ENCODE measurements at regions of chr6 and their contacts with region 1.

Region 1: DNA sequence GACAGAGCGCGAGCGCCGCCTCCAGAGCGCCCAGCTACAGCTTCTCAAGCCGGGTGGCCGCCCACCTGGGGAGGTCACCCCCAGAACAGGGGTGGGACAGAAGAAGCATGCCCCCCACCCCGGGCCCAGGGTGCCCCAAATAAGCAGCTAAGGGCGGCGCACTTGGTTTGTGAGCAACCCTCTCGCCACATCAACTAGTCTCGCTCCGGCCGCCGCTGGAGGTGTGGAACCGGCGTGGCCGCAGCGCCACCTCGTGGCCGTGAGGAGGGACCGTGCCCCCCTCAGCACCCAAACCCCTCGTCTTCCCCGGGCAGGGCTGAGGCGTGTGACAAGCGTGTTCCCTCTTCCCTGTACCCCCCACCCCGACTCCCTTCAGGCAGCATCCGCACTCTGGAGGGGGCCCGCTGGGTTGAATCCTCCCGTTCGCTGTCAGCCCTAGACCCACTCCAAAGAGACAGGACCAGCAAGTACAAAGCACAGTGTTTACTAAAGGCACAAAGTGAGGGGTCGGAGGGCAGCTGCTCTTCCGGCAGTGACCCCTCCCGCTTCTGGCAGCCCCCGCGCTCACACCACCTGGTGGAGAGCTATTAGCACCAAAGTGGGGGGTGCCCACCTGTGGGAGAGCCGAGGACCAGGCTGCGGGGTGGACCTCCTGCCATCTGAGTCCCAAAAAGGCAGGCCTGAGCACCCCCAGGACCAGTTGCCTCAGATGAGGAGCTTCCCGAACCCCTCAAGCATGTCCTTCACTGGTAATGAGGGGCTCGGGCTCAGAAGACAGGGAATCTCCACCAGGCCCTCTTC is 45.4 kb downstream of the MDFI start:
- DNase-seq: peak; percentile 60 to 90 (median 74)
- ATAC-seq: peak; percentile 88
- H3K4me3 ChIP-seq: peak overlapping the region; percentile 59
- H3K4me3 Mint-ChIP-seq: peak overlapping the region; percentile 83
- H3K27ac ChIP-seq: no peak overlapping the region
- H3K27ac Mint-ChIP-seq: peak overlapping the region; percentile 79
- H3K4me1 ChIP-seq: peaks cover 20% of the 10 kb centered on the region
- H3K4me1 Mint-ChIP-seq: peaks cover 12% of the 10 kb centered on the region
- H3K27me3 ChIP-seq: no peaks in the 10 kb centered on the region
- H3K27me3 Mint-ChIP-seq: no peaks in the 10 kb centered on the region
- CTCF ChIP-seq: peak; percentile 83

Region 2: GRCh38 chr6:41306187-41306854 is 377.4 kb before region 1 on chr6:
- CTCF ChIA-PET with region 1: no interaction called
- POLR2A ChIA-PET with region 1: no interaction called
- intact Hi-C with region 1: loop called in 1 of 2 experiments (anchors 10 kb)
- DNase-seq: peak in 11 of 14 experiments; percentile 16 to 80 (median 24)
- ATAC-seq: no peak
- H3K4me3 ChIP-seq: no peak overlapping the region
- H3K4me3 Mint-ChIP-seq: no peak overlapping the region
- H3K27ac ChIP-seq: no peak overlapping the region
- H3K27ac Mint-ChIP-seq: no peak overlapping the region
- H3K4me1 ChIP-seq: no peaks in the 10 kb centered on the region
- H3K4me1 Mint-ChIP-seq: peaks cover 5% of the 10 kb centered on the region
- H3K27me3 ChIP-seq: peaks cover 2 to 5% of the 10 kb centered on the region in 2 experiments
- H3K27me3 Mint-ChIP-seq: peaks cover 5% of the 10 kb centered on the region
- CTCF ChIP-seq: peak; percentile 77

Region 3: DNA sequence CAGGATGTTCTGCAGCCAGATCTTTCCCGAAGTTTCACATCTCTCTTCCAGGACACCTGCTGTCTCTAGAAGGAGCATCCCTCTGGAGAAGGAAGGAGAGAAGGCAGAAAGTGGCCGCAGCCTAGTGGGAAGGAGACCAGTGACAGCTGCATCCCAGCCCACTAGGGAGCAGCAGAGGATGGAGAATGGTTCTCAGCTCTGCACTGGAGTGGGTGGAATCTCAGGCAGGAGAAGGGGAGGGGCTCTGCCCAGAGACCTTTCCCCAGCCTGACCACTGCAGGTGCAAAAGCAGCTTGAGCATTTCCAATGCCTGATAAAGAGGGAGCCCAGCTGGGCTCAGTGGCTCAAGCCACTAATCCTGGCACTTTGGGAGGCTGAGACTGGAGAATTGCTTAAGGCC is 316.0 kb before region 1 on chr6:
- CTCF ChIA-PET with region 1: no interaction called
- POLR2A ChIA-PET with region 1: no interaction called
- intact Hi-C with region 1: loop called (anchors 1 kb)
- DNase-seq: no peak
- ATAC-seq: no peak
- H3K4me3 ChIP-seq: no peak overlapping the region
- H3K4me3 Mint-ChIP-seq: no peak overlapping the region
- H3K27ac ChIP-seq: no peak overlapping the region
- H3K27ac Mint-ChIP-seq: no peak overlapping the region
- H3K4me1 ChIP-seq: peaks cover 26% of the 10 kb centered on the region
- H3K4me1 Mint-ChIP-seq: peaks cover 27% of the 10 kb centered on the region
- H3K27me3 ChIP-seq: peaks cover 42 to 56% of the 10 kb centered on the region in 2 experiments
- H3K27me3 Mint-ChIP-seq: peaks cover 72% of the 10 kb centered on the region
- CTCF ChIP-seq: no peak

Region 4: GRCh38 chr6:41424370-41425058 is 259.2 kb before region 1 on chr6:
- CTCF ChIA-PET with region 1: no interaction called
- POLR2A ChIA-PET with region 1: no interaction called
- intact Hi-C with region 1: loop called (anchors 1 to 2 kb)
- DNase-seq: peak; percentile 57 to 88 (median 78)
- ATAC-seq: peak; percentile 63
- H3K4me3 ChIP-seq: no peak overlapping the region
- H3K4me3 Mint-ChIP-seq: no peak overlapping the region
- H3K27ac ChIP-seq: no peak overlapping the region
- H3K27ac Mint-ChIP-seq: no peak overlapping the region
- H3K4me1 ChIP-seq: peaks cover 37% of the 10 kb centered on the region
- H3K4me1 Mint-ChIP-seq: peaks cover 8% of the 10 kb centered on the region
- H3K27me3 ChIP-seq: peaks cover 20 to 34% of the 10 kb centered on the region in 2 experiments
- H3K27me3 Mint-ChIP-seq: peaks cover 27% of the 10 kb centered on the region
- CTCF ChIP-seq: peak; percentile 87

Region 5: GRCh38 chr6:41439524-41440418 is 243.9 kb before region 1 on chr6:
- CTCF ChIA-PET with region 1: interaction called, 3 read pairs
- POLR2A ChIA-PET with region 1: no interaction called
- intact Hi-C with region 1: loop called in 1 of 2 experiments (anchors 5 kb)
- DNase-seq: peak in 4 of 14 experiments; percentile 10 to 72 (median 62)
- ATAC-seq: peak; percentile 64
- H3K4me3 ChIP-seq: no peak overlapping the region
- H3K4me3 Mint-ChIP-seq: peak overlapping the region; percentile 49
- H3K27ac ChIP-seq: no peak overlapping the region
- H3K27ac Mint-ChIP-seq: no peak overlapping the region
- H3K4me1 ChIP-seq: peaks cover 49% of the 10 kb centered on the region
- H3K4me1 Mint-ChIP-seq: peaks cover 40% of the 10 kb centered on the region
- H3K27me3 ChIP-seq: peaks cover 5 to 6% of the 10 kb centered on the region in 2 experiments
- H3K27me3 Mint-ChIP-seq: peaks cover 21% of the 10 kb centered on the region
- CTCF ChIP-seq: no peak

Region 6: DNA sequence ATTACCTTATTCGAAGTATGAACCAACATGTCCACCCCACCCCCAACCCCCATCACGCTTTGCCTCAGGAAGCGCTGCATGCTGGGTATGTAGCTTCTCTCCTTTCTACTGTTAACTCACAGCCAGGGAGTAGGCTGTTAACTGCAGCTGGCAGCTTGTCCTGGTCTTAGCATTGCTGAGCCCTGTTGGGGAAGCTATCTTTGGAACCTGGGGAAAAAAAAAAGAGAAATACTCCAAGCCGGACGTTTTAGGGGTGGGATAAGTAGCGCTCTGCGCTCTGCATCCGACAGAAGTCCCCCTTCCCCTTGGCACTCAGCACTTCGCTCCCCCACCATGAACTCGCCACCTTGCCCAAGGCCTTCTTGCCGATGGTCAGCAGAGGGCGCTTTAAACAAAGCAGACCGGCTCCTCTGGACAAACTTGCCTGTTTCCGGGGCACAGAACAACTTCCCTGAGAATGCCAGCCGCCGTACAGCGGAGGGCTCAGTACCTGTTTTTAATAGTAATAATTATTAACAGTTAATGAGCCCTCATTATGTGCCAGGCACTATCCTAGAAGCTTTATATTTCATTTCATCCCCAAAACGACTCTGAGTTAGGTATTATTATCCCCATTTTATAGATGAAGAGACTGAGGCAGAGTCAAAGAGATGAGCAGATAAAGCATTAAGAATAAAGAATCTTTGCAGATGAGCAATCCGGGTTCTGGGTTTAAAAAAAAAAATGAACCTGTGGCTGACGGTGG is 80.7 kb before region 1 on chr6:
- CTCF ChIA-PET with region 1: interaction called, 3 read pairs
- POLR2A ChIA-PET with region 1: interaction called, 4 read pairs
- intact Hi-C with region 1: loop called (anchors 1 kb)
- DNase-seq: peak; percentile 54 to 86 (median 66)
- ATAC-seq: peak; percentile 80
- H3K4me3 ChIP-seq: no peak overlapping the region
- H3K4me3 Mint-ChIP-seq: no peak overlapping the region
- H3K27ac ChIP-seq: no peak overlapping the region
- H3K27ac Mint-ChIP-seq: no peak overlapping the region
- H3K4me1 ChIP-seq: peaks cover 8% of the 10 kb centered on the region
- H3K4me1 Mint-ChIP-seq: no peaks in the 10 kb centered on the region
- H3K27me3 ChIP-seq: peaks cover 0 to 3% of the 10 kb centered on the region in 2 experiments
- H3K27me3 Mint-ChIP-seq: no peaks in the 10 kb centered on the region
- CTCF ChIP-seq: peak; percentile 80

Region 7: GRCh38 chr6:41798901-41799558 is 115.3 kb after region 1 on chr6:
- CTCF ChIA-PET with region 1: no interaction called
- POLR2A ChIA-PET with region 1: no interaction called
- intact Hi-C with region 1: no loop called
- DNase-seq: no peak
- ATAC-seq: no peak
- H3K4me3 ChIP-seq: no peak overlapping the region
- H3K4me3 Mint-ChIP-seq: no peak overlapping the region
- H3K27ac ChIP-seq: no peak overlapping the region
- H3K27ac Mint-ChIP-seq: no peak overlapping the region
- H3K4me1 ChIP-seq: no peaks in the 10 kb centered on the region
- H3K4me1 Mint-ChIP-seq: no peaks in the 10 kb centered on the region
- H3K27me3 ChIP-seq: no peaks in the 10 kb centered on the region
- H3K27me3 Mint-ChIP-seq: no peaks in the 10 kb centered on the region
- CTCF ChIP-seq: no peak

Measured in CD4-positive, alpha-beta T cell (primary cell).